ENCODE measurements at regions of chr17 and their contacts with region 1.

Region 1: DNA sequence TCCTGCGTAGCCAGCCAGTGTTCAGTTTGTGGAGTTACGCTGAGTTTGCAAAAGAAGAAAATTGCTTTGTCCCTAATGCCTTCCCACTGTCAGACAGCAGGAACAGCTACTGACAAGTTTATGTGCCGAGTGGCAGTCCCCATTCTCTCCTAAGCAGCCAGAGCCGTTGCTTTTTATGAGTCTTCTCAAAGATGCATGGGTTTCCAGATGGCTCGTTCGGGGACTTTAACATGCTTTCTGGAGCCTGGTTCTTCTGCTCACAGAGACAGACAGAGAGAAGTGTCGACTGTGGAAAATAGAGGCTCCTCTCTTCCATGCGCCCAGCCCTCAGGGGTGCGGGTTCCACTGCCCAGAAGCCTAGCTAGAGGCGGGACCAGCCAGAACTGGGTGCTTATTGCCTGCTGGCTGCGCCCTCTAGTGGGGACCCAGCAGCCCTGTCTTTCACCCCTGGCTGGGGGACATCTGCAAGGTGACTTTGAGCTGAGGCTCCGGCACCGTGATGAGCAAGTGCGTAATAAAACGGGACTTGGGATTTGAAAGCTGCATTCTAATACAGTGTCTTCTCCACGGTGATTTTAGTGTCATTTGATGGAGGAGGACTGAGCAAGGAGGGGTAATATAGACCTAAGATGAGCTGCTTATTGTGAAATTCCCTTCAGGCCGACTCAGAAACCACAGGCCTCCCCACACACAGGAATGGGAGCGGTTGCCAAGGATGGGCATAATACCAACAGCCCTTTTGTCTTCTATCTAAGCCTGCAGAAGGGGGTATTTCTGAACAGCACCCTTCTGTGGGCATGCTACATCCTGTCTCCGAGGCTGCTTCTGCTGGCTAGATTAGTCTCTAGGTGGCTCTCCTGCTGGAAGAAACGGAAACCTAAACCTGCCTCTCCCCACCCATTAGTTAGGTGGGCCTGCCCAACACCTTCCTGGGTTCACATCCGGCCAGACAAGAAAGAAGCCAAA is 73.1 kb downstream of the CCDC182 start:
- DNase-seq: peak; percentile 83
- H3K4me3 Mint-ChIP-seq: no peak overlapping the region
- H3K27ac Mint-ChIP-seq: peak overlapping the region; percentile 83
- H3K4me1 Mint-ChIP-seq: peaks cover 34% of the 10 kb centered on the region
- H3K27me3 Mint-ChIP-seq: no peaks in the 10 kb centered on the region

Region 2: DNA sequence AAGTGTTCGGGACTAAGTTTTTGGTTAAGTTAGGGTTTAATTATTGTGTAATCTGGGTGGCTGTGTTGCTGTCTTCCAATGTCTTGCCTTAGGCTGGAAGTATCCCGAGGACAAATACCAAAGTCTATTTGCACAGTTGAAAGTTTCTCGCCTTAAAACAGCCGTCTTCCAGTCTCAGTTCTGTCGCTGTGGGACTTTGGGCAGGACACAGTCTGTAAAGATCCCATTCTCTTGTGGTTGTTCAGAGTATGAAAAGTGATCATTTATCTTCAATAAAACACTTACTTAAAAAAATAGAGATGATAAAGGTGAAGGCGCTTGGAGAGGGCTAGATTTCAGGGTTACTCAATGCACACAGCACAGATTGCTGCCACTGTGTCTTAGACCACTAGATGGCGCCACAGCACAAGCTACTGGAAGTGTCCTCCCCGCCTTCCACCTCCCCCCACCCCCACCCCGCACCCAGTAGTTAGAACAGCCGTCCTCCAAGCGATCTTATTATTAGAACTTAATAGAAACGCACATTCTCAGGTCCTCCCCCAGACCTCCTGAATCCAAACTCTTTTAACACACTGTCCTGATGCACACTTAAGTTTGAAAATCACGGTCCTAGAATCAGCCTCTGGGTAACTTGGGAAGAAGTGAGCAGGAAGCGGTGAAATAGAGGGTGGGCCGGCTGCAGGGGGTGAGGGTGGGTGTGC is 541.0 kb before region 1 on chr17:
- CTCF ChIA-PET with region 1: interaction called, 9 read pairs
- intact Hi-C with region 1: loop called (anchors 1 kb)
- DNase-seq: peak; percentile 91
- H3K4me3 Mint-ChIP-seq: no peak overlapping the region
- H3K27ac Mint-ChIP-seq: no peak overlapping the region
- H3K4me1 Mint-ChIP-seq: peaks cover 8% of the 10 kb centered on the region
- H3K27me3 Mint-ChIP-seq: no peaks in the 10 kb centered on the region

Region 3: DNA sequence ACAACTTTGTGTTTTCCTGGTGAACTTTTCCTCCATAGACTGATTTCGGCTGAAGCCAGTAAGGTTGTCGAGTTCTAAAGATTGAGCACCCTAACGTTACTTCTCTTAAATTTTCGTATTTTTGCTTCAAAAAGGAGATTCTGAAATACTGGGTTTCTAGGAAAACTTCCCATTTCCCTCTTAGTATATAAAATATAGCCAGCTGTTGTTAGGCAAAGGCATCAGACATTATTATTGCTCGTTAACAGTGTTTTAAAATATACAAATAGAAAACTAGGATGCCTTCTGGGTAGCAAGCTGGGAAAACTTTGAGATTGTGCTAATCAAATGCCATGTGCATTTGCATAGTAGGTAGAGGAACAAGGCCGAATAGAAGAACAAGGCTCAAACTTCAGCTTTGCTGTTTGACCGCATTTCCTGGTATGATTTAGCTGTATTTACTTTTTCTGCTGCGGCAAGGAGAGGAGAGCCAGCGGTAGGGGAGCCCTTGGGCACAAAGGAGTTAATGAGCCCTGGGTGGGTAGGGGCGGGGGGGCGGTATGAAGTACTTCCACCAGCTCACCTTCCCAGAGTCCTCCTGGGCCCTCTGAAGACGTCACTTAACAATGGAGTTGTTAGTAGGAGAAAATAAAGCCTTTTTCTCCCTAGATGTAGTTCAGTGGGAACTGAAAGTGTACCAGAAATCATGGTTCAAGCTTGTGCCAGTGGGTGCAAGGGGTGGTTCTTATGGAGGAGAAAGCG is 263.7 kb before region 1 on chr17:
- CTCF ChIA-PET with region 1: interaction called, 3 read pairs
- intact Hi-C with region 1: loop called (anchors 10 kb)
- DNase-seq: peak; percentile 69
- H3K4me3 Mint-ChIP-seq: no peak overlapping the region
- H3K27ac Mint-ChIP-seq: peak overlapping the region; percentile 21
- H3K4me1 Mint-ChIP-seq: peaks cover 39% of the 10 kb centered on the region
- H3K27me3 Mint-ChIP-seq: no peaks in the 10 kb centered on the region

Region 4: GRCh38 chr17:57463103-57463851 is 208.7 kb before region 1 on chr17:
- CTCF ChIA-PET with region 1: no interaction called
- intact Hi-C with region 1: loop called (anchors 1 kb)
- DNase-seq: peak; percentile 94
- H3K4me3 Mint-ChIP-seq: peak overlapping the region; percentile 8
- H3K27ac Mint-ChIP-seq: peak overlapping the region; percentile 73
- H3K4me1 Mint-ChIP-seq: peaks cover 59% of the 10 kb centered on the region
- H3K27me3 Mint-ChIP-seq: no peaks in the 10 kb centered on the region

Region 5: GRCh38 chr17:57604771-57605674 is 66.9 kb before region 1 on chr17:
- CTCF ChIA-PET with region 1: interaction called, 58 read pairs
- intact Hi-C with region 1: loop called (anchors 1 kb)
- DNase-seq: peak; percentile 63
- H3K4me3 Mint-ChIP-seq: peak overlapping the region; percentile 36
- H3K27ac Mint-ChIP-seq: peak overlapping the region; percentile 94
- H3K4me1 Mint-ChIP-seq: peaks cover 81% of the 10 kb centered on the region
- H3K27me3 Mint-ChIP-seq: no peaks in the 10 kb centered on the region

Region 6: DNA sequence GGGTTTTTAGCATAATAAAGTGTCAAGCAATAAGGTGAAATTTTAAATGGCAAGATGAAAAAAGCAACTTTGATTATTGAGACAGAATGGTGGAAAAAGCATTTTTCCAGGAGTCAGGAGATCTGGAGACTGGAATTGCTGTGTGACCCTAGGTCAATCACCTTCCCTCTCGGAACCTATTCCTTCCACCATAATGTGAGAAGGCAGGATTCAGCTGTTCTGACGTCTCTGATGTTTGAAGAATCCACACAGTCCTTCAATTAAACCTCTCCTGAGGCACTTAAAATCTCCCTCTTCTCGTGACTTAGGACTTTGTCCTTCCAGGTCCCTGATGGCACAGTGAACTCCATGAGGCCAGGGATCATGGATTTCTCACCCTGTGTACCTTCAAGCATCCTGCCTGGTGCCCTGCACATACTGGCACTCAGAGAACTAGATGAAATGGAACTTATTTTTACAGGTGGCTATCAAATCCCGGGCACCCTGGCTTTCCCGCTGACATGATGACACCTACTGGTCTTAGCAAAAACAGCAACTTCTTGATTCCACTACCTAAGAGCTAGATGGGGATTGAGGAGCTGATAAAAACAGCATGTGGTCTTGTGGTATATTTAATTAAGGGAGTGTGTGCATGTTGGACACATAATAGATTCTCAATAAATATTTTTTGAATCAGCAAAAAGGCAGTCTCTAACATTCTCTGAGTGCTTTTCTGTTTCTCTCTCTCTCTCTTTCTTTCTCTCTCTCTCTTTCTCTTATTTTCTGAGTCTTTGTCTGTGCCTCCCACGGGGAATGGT is 75.5 kb after region 1 on chr17:
- CTCF ChIA-PET with region 1: interaction called, 7 read pairs
- intact Hi-C with region 1: loop called (anchors 5 kb)
- DNase-seq: peak; percentile 52
- H3K4me3 Mint-ChIP-seq: no peak overlapping the region
- H3K27ac Mint-ChIP-seq: no peak overlapping the region
- H3K4me1 Mint-ChIP-seq: no peaks in the 10 kb centered on the region
- H3K27me3 Mint-ChIP-seq: peaks cover 2% of the 10 kb centered on the region

Region 7: DNA sequence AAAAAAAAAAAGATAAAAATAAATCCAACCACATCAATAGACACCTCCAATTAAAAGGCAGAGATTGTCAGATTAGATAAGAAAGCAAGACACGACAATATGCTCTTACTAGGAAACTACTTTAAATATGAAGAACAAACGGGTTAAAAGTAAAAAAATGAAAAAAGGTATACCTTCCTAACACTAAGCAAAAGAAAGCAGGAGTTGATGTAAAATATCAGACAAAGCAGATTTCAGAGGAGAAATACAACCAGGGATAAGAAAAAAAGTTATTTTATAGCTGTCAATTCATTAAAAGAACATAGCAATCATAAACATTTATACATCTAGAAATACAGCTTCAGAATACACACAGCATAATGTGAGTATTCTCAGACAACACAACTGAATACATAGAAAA is 122.9 kb after region 1 on chr17:
- CTCF ChIA-PET with region 1: no interaction called
- intact Hi-C with region 1: no loop called
- DNase-seq: no peak
- H3K4me3 Mint-ChIP-seq: no peak overlapping the region
- H3K27ac Mint-ChIP-seq: no peak overlapping the region
- H3K4me1 Mint-ChIP-seq: peaks cover 6% of the 10 kb centered on the region
- H3K27me3 Mint-ChIP-seq: peaks cover 2% of the 10 kb centered on the region